Caco-2 (cell line): ENCODE measurements at regions of chr2 and their contacts with region 1.

Region 1: DNA sequence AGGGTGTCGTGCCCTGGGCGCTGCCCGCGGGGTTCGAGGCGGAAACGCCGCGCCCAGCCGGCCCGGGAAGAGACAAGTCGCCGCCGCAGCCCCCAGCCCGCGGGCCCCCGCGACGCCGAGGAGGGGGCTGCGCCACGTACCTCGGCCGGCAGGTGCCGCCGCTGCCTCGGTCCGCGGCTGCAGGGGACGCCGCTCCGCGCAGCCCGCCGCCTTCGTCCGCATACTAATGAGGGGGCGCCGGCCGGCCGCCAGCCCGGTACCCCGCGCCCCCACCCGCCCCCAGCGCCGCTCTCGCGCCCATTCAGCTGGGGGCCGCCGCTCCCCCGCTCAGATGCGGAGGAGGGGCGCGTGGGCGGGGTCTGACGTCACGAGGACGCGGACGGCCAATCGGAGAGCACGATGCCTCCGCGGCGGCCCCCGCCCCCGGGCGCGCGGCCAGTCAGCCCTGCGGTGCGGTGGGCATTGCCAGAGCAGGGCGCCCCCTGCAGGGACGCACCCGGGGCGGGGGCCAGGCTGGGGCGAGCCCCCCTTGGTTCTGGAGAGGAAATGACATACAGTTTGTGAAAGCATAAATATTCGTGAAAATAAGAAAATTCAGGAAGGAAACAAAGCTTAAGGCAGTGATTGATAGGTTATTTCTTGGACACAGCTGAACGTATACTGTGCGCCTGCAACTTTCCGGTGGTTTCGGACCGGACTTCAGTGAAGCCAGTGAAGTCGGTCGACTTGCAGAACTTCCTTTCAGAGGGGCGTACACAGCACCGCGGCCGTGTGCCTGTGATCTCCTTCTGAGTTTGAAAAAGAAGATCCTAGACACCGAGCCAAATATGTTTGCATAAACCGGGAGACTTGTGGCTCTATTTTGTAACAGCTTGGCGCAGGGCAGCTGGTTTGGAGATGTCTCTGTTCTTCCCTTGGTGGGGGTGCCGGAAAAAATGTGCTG is at the start of gene ST3GAL5:
- DNase-seq: peak; percentile 84 to 94
- H3K4me3 ChIP-seq: peak within 1 kb of the TSS; percentile 60
- H3K4me3 Mint-ChIP-seq: peak within 1 kb of the TSS; percentile 89
- H3K27ac Mint-ChIP-seq: peak within 1 kb of the TSS; percentile 46
- H3K4me1 ChIP-seq: no peaks in the 10 kb centered on the region
- H3K4me1 Mint-ChIP-seq: peaks cover 21% of the 10 kb centered on the region
- H3K27me3 ChIP-seq: no peaks in the 10 kb centered on the region
- H3K27me3 Mint-ChIP-seq: peaks cover 5% of the 10 kb centered on the region
- CTCF ChIP-seq: peak; percentile 87
- total RNA-seq, gene ST3GAL5: 3.4 and 4.1 TPM in 2 replicates

Region 2: DNA sequence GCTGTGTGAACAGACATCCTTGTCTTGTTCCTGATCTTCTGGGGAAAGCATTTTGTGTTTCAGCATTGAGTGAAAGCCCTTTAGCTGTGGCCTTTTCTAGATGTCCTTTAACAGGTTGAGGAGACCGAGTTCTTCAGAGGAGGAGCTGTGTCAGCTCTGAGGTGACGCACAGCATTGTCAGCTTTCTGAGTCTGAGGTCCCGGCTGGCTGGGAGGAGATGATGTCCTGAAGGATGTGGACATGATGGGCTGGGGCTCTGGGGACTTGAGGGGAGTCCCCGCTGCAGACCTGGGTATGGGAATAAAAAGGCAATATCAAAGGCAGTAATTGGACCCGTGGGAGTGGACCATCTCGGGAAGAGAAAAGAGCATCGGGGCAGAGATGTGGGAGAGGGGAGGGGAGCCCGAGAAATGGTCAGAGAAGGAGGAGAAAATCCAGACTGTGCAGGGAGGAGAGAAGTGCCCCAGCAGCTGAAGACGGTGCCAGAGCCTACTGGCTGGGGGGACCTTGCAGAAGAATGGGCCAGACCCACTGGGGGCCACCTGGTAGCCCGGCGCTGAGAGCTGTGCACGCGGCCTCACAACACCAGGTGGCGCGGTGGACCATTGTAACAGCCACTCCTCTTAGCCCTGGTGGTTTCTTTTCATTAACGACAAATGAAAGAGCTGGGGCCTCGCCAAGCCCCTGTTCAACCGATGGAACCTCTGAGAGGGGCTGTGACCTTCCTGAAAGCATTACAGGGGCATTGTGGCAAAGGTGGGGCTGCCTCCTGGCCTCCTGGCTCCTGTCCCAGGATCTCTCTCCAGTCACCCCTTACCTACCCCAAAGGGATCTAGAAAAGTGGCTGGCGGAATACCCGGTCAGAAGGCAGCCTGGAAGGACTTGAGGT is 61.7 kb before region 1 on chr2:
- CTCF ChIA-PET with region 1: interaction called, 31 read pairs
- POLR2A ChIA-PET with region 1: no interaction called
- intact Hi-C with region 1: loop called (anchors 1 kb)
- DNase-seq: peak; percentile 64 to 82
- H3K4me3 ChIP-seq: no peak overlapping the region
- H3K4me3 Mint-ChIP-seq: peak overlapping the region; percentile 3
- H3K27ac Mint-ChIP-seq: no peak overlapping the region
- H3K4me1 ChIP-seq: no peaks in the 10 kb centered on the region
- H3K4me1 Mint-ChIP-seq: peaks cover 5% of the 10 kb centered on the region
- H3K27me3 ChIP-seq: no peaks in the 10 kb centered on the region
- H3K27me3 Mint-ChIP-seq: peaks cover 3% of the 10 kb centered on the region
- CTCF ChIP-seq: peak; percentile 87 to 91

Region 3: GRCh38 chr2:85843543-85843942 is 45.4 kb before region 1 on chr2:
- CTCF ChIA-PET with region 1: no interaction called
- POLR2A ChIA-PET with region 1: no interaction called
- intact Hi-C with region 1: no loop called
- DNase-seq: peak in 1 of 2 experiments; percentile 34
- H3K4me3 ChIP-seq: no peak overlapping the region
- H3K4me3 Mint-ChIP-seq: no peak overlapping the region
- H3K27ac Mint-ChIP-seq: no peak overlapping the region
- H3K4me1 ChIP-seq: no peaks in the 10 kb centered on the region
- H3K4me1 Mint-ChIP-seq: no peaks in the 10 kb centered on the region
- H3K27me3 ChIP-seq: no peaks in the 10 kb centered on the region
- H3K27me3 Mint-ChIP-seq: no peaks in the 10 kb centered on the region
- CTCF ChIP-seq: peak; percentile 35 to 55

Region 4: GRCh38 chr2:85920810-85921545 is 32.0 kb after region 1 on chr2:
- CTCF ChIA-PET with region 1: interaction called, 4 read pairs
- POLR2A ChIA-PET with region 1: no interaction called
- intact Hi-C with region 1: loop called (anchors 1 kb)
- DNase-seq: peak in 1 of 2 experiments; percentile 18
- H3K4me3 ChIP-seq: no peak overlapping the region
- H3K4me3 Mint-ChIP-seq: peak overlapping the region; percentile 47
- H3K27ac Mint-ChIP-seq: peak overlapping the region; percentile 56
- H3K4me1 ChIP-seq: peaks cover 23% of the 10 kb centered on the region
- H3K4me1 Mint-ChIP-seq: peaks cover 32% of the 10 kb centered on the region
- H3K27me3 ChIP-seq: no peaks in the 10 kb centered on the region
- H3K27me3 Mint-ChIP-seq: no peaks in the 10 kb centered on the region
- CTCF ChIP-seq: no peak

Region 5: DNA sequence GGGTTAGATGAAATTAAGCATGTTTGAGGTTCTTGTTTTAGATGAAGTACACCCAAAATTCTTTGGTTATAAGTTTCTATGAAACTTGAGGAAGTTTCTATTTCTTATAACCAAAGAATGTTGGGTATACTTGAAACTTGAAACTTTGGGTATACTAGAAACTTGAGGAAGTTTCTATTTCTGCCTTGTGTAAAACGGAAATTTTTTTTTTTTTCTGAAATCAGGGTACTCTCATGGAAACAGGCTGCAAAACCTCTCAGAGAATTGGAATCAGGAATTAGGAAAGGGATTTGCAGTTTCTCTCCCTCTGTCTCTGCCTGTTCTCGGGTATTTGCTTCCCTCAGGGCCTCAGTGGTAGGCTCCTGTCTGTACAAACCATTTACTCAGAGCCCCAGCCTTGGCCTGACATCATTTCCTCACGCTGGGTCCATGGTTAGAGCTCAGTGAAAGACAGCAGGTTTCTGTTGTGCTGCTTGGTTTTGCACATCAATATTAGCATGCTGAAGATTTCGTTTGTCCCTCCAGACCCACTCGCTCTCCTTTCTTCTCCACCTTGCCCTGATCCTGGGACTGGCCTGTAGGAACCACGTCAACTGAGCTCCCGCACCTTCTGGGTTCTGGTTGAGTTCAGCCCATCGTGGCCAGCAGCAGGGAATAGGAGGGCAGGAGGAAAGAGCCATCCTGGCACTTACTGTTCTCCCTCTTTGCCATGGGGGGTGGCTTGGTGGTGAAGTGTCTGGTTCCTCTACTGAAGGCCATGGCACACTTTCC is 110.3 kb after region 1 on chr2:
- CTCF ChIA-PET with region 1: no interaction called
- POLR2A ChIA-PET with region 1: no interaction called
- intact Hi-C with region 1: loop called (anchors 5 kb)
- DNase-seq: peak in 1 of 2 experiments; percentile 22
- H3K4me3 ChIP-seq: no peak overlapping the region
- H3K4me3 Mint-ChIP-seq: no peak overlapping the region
- H3K27ac Mint-ChIP-seq: peak overlapping the region; percentile 23
- H3K4me1 ChIP-seq: peaks cover 21% of the 10 kb centered on the region
- H3K4me1 Mint-ChIP-seq: peaks cover 6% of the 10 kb centered on the region
- H3K27me3 ChIP-seq: no peaks in the 10 kb centered on the region
- H3K27me3 Mint-ChIP-seq: no peaks in the 10 kb centered on the region
- CTCF ChIP-seq: no peak

Region 6: DNA sequence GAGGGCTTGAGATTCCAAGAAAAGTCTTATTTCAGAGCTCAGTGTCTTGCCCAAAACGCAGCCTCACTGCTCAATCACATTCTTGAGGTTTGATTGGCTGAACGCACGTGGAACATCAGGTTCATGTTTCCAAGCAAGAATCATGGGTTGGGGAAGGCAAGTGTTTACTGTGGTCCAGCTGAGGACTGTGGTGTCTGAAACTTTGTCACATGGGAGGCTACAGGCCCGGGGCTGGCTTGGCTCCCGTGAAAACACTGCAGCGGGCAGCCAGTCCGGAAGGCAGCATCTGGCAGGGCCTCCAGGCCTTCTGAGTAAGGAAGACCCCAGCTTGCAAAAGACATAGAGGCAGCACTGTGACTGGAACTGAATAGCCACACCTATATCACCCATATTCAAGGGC is 132.0 kb after region 1 on chr2:
- CTCF ChIA-PET with region 1: interaction called, 5 read pairs
- POLR2A ChIA-PET with region 1: no interaction called
- intact Hi-C with region 1: loop called (anchors 2 kb)
- DNase-seq: no peak
- H3K4me3 ChIP-seq: no peak overlapping the region
- H3K4me3 Mint-ChIP-seq: no peak overlapping the region
- H3K27ac Mint-ChIP-seq: no peak overlapping the region
- H3K4me1 ChIP-seq: peaks cover 7% of the 10 kb centered on the region; the same call in 1 of the 2 replicates
- H3K4me1 Mint-ChIP-seq: peaks cover 7% of the 10 kb centered on the region
- H3K27me3 ChIP-seq: no peaks in the 10 kb centered on the region
- H3K27me3 Mint-ChIP-seq: no peaks in the 10 kb centered on the region
- CTCF ChIP-seq: no peak

Region 7: DNA sequence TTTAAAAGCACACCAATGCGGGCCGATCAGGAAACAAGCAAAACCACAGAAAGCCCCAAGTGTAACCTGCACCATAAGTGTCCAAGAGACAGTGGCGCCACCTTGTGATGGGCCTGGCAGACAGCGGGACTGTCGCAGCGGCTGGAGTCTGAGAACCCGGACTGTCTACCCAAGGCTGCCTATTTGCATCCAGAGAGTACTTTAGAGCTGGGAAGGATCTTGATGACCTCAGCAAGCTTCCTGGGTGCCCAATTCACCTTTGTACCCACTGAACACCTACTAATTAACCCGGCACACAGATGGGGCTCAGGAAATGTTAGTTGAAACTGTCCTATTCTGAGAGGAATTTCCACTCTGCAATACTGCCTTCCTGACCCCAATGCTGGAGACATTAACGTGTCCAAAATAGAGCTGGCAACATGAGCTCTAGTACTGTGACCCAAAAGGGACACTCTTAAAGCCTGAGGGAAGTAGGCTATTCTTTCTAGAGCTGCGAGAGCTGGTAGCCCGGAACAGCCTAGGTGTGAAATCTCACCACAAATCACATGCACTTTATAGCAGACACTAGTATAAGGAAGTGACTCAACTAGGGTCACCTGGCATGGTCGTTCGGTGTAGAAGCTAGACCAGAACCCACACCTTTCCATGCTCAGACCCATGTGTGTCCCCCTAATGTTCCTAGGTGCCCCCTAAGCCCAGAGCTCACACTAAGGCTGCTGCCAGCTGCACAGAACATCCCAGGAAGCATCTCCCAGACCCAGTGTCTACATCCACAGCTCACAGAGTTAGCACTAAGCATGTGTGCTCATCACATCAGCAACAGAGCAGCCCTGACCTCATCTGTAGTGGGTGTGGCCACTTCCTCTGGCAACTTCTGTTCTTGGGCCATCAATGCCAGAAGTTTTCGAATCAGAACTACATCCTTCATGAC is 191.3 kb after region 1 on chr2:
- CTCF ChIA-PET with region 1: interaction called, 5 read pairs
- POLR2A ChIA-PET with region 1: no interaction called
- intact Hi-C with region 1: loop called (anchors 10 kb)
- DNase-seq: peak; percentile 82 to 85
- H3K4me3 ChIP-seq: no peak overlapping the region
- H3K4me3 Mint-ChIP-seq: no peak overlapping the region
- H3K27ac Mint-ChIP-seq: no peak overlapping the region
- H3K4me1 ChIP-seq: no peaks in the 10 kb centered on the region; the same call in 1 of the 2 replicates
- H3K4me1 Mint-ChIP-seq: no peaks in the 10 kb centered on the region
- H3K27me3 ChIP-seq: no peaks in the 10 kb centered on the region
- H3K27me3 Mint-ChIP-seq: no peaks in the 10 kb centered on the region
- CTCF ChIP-seq: peak; percentile 61 to 90